GM12878 (cell line): ENCODE measurements at regions of chr17 and their contacts with region 1.

Region 1: GRCh38 chr17:28726226-28727130 is at the start of gene TLCD1:
- DNase-seq: no peak
- ATAC-seq: peak; percentile 44
- H3K4me3 ChIP-seq: peak within 1 kb of the TSS; percentile 72
- H3K27ac ChIP-seq: peak within 1 kb of the TSS; percentile 94
- H3K4me1 ChIP-seq: peaks cover 23% of the 10 kb centered on the region
- H3K27me3 ChIP-seq: no peaks in the 10 kb centered on the region
- CTCF ChIP-seq: peak; percentile 99 to 100 (median 99); a peak in 5 of 6 replicates
- EP300 ChIP-seq: no peak
- POLR2A ChIP-seq: no peak; the same call in 1 of the 2 replicates
- RAD21 ChIP-seq: peak; percentile 98
- polyA plus RNA-seq, gene TLCD1: 2.9 to 7.1 TPM

Region 2: GRCh38 chr17:28644985-28645939 is 81.2 kb before region 1 on chr17 and contains the start of gene BLTP2:
- CTCF ChIA-PET with region 1: interaction called, 38 read pairs
- POLR2A ChIA-PET with region 1: interaction called, 32 read pairs
- RAD21 ChIA-PET with region 1: interaction called, 22 read pairs
- SMC1A ChIA-PET with region 1: interaction called, 22 read pairs
- in situ Hi-C with region 1: no loop called
- intact Hi-C with region 1: no loop called
- DNase-seq: peak; percentile 82
- ATAC-seq: peak; percentile 97
- H3K4me3 ChIP-seq: peak within 1 kb of the TSS; percentile 85
- H3K27ac ChIP-seq: peak within 1 kb of the TSS; percentile 85
- H3K4me1 ChIP-seq: peaks cover 14% of the 10 kb centered on the region
- H3K27me3 ChIP-seq: no peaks in the 10 kb centered on the region
- CTCF ChIP-seq: no peak
- EP300 ChIP-seq: no peak
- POLR2A ChIP-seq: peak; percentile 86
- RAD21 ChIP-seq: no peak
- polyA plus RNA-seq, gene BLTP2: 14.2 to 16.9 TPM

Region 3: GRCh38 chr17:28684963-28685362 is 41.5 kb before region 1 on chr17:
- CTCF ChIA-PET with region 1: no interaction called
- POLR2A ChIA-PET with region 1: no interaction called
- RAD21 ChIA-PET with region 1: no interaction called
- SMC1A ChIA-PET with region 1: no interaction called
- in situ Hi-C with region 1: no loop called
- intact Hi-C with region 1: no loop called
- DNase-seq: no peak
- ATAC-seq: no peak
- H3K4me3 ChIP-seq: no peak overlapping the region
- H3K27ac ChIP-seq: no peak overlapping the region
- H3K4me1 ChIP-seq: no peaks in the 10 kb centered on the region
- H3K27me3 ChIP-seq: no peaks in the 10 kb centered on the region
- CTCF ChIP-seq: no peak
- EP300 ChIP-seq: no peak
- POLR2A ChIP-seq: no peak
- RAD21 ChIP-seq: no peak

Region 4: DNA sequence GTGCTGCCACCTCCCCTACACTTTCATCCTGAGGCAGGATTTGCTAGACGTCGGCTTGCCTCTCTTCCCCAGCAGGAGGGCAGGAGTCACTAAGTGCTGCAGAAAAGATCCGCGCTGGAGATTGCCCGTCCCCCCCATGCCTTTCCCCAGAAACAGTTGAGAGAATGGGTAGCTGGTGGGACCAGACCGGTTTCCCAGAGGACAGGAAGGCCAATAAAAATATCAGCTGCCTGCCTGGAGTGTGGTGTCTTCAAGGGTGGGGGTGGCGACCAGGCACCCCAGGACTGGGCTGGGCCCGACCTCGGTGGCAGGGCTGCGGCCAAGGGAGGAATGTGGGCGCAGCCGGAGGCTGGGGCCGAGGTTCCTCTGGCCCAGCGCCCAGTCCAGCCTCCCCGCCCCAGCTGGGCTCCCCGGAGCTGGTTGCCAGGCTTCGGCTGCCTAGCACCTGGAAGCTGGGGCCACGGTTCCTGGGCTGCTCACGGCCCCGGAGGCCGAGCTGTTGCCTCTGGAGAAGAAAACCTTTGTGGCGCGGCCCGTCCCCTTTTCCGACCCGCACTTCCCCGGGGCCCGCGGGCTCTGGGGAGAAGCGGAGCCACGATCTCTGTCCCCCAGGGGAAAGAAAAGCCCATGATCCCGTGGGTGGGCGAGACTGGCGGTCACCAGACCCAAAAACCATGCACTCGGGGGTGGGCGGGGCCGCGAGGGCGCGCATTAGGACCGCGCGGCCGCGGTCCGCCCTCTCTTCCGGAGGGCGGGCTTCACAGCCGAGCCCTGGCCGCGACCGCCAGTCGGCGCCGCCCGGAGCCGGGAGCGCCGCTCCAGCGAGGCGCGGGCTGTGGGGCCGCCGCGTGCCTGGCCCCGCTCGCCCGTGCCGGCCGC is 17.0 kb after region 1 on chr17 and contains the start of gene TRAF4:
- CTCF ChIA-PET with region 1: interaction called, 394 read pairs
- POLR2A ChIA-PET with region 1: interaction called, 485 read pairs
- RAD21 ChIA-PET with region 1: interaction called, 375 read pairs
- SMC1A ChIA-PET with region 1: interaction called, 326 read pairs
- in situ Hi-C with region 1: no loop called
- intact Hi-C with region 1: loop called (anchors 1 kb)
- DNase-seq: no peak
- ATAC-seq: peak; percentile 69
- H3K4me3 ChIP-seq: peak within 1 kb of the TSS; percentile 92
- H3K27ac ChIP-seq: peak within 1 kb of the TSS; percentile 96
- H3K4me1 ChIP-seq: peaks cover 72% of the 10 kb centered on the region
- H3K27me3 ChIP-seq: no peaks in the 10 kb centered on the region
- CTCF ChIP-seq: peak in 1 of 3 experiments; percentile 26; a peak in 1 of 6 replicates
- EP300 ChIP-seq: peak; percentile 17 to 53; a peak in 1 of 4 replicates
- POLR2A ChIP-seq: peak; percentile 97
- RAD21 ChIP-seq: no peak
- polyA plus RNA-seq, gene TRAF4: 3.7 to 8.2 TPM

Region 5: DNA sequence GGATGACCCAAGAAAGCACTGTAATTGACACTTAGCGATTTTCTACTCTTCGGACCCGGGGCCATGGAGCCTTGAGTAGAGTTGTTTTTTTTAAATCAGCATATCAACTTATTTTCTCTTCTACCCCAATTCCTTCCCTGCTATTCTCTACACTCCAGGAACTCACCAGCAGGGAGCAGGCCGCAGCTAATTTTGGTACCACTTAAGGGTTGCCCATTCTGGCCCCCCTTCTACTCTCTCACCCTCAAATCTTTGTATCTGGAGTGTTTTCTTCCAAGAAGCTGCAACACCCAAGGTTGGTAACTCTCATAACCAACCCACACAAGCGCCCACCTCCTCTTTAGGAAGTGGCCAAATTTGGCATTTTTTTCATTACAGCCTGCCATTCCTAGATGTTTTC is 122.8 kb after region 1 on chr17:
- CTCF ChIA-PET with region 1: interaction called, 4 read pairs
- POLR2A ChIA-PET with region 1: interaction called, 3 read pairs
- RAD21 ChIA-PET with region 1: interaction called, 12 read pairs
- SMC1A ChIA-PET with region 1: no interaction called
- in situ Hi-C with region 1: no loop called
- intact Hi-C with region 1: loop called (anchors 5 kb)
- DNase-seq: no peak
- ATAC-seq: peak; percentile 91
- H3K4me3 ChIP-seq: no peak overlapping the region
- H3K27ac ChIP-seq: no peak overlapping the region
- H3K4me1 ChIP-seq: peaks cover 3% of the 10 kb centered on the region
- H3K27me3 ChIP-seq: no peaks in the 10 kb centered on the region
- CTCF ChIP-seq: peak; percentile 7 to 57 (median 19); a peak in 3 of 6 replicates
- EP300 ChIP-seq: no peak
- POLR2A ChIP-seq: no peak
- RAD21 ChIP-seq: peak; percentile 53

Region 6: DNA sequence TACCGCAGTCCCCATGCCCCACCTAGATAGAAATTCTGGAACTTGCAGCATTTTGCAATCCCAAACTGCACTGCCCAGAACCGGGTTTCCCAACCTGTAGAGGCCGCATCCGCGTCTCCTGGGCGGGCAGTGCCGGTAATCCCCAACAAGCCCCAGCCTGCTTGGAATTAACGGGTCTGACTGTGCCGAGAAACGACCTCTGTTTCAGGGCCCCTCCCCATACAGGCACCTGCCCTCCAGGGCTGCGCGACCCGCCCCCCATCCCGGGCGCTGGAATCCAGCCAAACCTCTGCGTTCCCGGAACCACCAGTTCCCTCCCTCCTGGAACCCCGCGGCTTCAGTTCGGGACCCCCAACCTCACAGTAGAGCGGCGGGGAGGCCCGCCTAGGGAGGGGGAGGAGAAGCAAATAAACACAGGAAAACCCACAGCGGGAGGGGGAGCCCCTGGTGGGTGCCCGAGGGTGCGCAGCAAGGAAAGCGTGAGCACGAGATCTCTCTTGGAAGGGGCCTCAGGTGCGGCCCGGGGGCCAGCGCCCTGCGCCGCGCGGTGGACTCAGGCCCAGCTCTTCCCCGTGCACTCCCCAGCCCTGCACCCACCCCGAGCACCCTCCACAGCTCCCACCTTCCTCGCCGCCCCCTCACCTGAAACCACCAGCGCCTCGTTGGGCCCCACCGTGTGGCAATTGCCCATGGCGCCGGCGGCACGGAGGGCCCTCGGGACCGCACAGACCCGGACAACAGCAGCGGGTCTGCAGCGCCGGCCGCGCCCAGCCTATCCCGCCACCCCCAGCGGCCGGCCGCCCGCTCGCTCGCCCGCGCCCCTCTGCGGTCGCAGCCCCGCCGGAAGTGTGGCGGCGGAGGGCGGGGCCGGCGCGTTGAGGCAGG is 170.6 kb after region 1 on chr17 and contains the start of gene FLOT2:
- CTCF ChIA-PET with region 1: interaction called, 48 read pairs
- POLR2A ChIA-PET with region 1: interaction called, 15 read pairs
- RAD21 ChIA-PET with region 1: interaction called, 22 read pairs
- SMC1A ChIA-PET with region 1: interaction called, 35 read pairs
- in situ Hi-C with region 1: no loop called
- intact Hi-C with region 1: loop called (anchors 2 kb)
- DNase-seq: no peak
- ATAC-seq: peak; percentile 43
- H3K4me3 ChIP-seq: peak within 1 kb of the TSS; percentile 92
- H3K27ac ChIP-seq: peak within 1 kb of the TSS; percentile 72
- H3K4me1 ChIP-seq: peaks cover 39% of the 10 kb centered on the region
- H3K27me3 ChIP-seq: no peaks in the 10 kb centered on the region
- CTCF ChIP-seq: peak in 2 of 3 experiments; percentile 11 to 17; a peak in 2 of 6 replicates
- EP300 ChIP-seq: no peak
- POLR2A ChIP-seq: peak; percentile 71
- RAD21 ChIP-seq: no peak
- polyA plus RNA-seq, gene FLOT2: 56.8 to 121 TPM

Region 7: GRCh38 chr17:28951991-28952975 is 225.8 kb after region 1 on chr17:
- CTCF ChIA-PET with region 1: interaction called, 63 read pairs
- POLR2A ChIA-PET with region 1: interaction called, 22 read pairs
- RAD21 ChIA-PET with region 1: interaction called, 27 read pairs
- SMC1A ChIA-PET with region 1: interaction called, 28 read pairs
- in situ Hi-C with region 1: no loop called
- intact Hi-C with region 1: loop called (anchors 1 kb)
- DNase-seq: peak; percentile 100
- ATAC-seq: peak; percentile 82
- H3K4me3 ChIP-seq: peak overlapping the region; percentile 83
- H3K27ac ChIP-seq: peak overlapping the region; percentile 74
- H3K4me1 ChIP-seq: peaks cover 4% of the 10 kb centered on the region
- H3K27me3 ChIP-seq: no peaks in the 10 kb centered on the region
- CTCF ChIP-seq: no peak
- EP300 ChIP-seq: peak in 1 of 2 experiments; percentile 31; a peak in 1 of 4 replicates
- POLR2A ChIP-seq: peak; percentile 85
- RAD21 ChIP-seq: no peak